ENCODE measurements at regions of chr3 and their contacts with region 1.

Region 1: GRCh38 chr3:135258916-135259315 is 463.9 kb downstream of the EPHB1 start:
- DNase-seq: no peak
- ATAC-seq: no peak
- H3K4me3 ChIP-seq: no peak overlapping the region
- H3K27ac ChIP-seq: no peak overlapping the region
- H3K4me1 ChIP-seq: no peaks in the 10 kb centered on the region
- H3K27me3 ChIP-seq: peaks cover 4% of the 10 kb centered on the region
- CTCF ChIP-seq: no peak
- POLR2A ChIP-seq: no peak
- RAD21 ChIP-seq: no peak

Region 2: GRCh38 chr3:135229018-135229495 is 29.9 kb before region 1 on chr3:
- CTCF ChIA-PET with region 1: no interaction called
- POLR2A ChIA-PET with region 1: no interaction called
- RAD21 ChIA-PET with region 1: no interaction called
- intact Hi-C with region 1: loop called (anchors 1 kb)
- DNase-seq: no peak
- ATAC-seq: peak; percentile 63
- H3K4me3 ChIP-seq: no peak overlapping the region
- H3K27ac ChIP-seq: no peak overlapping the region
- H3K4me1 ChIP-seq: no peaks in the 10 kb centered on the region
- H3K27me3 ChIP-seq: no peaks in the 10 kb centered on the region; the same call in none of the 2 replicates
- CTCF ChIP-seq: no peak
- POLR2A ChIP-seq: no peak
- RAD21 ChIP-seq: no peak